ENCODE measurements at regions of chr19 and their contacts with region 1.

Region 1: GRCh38 chr19:8158411-8159074 is 9.2 kb upstream of the FBN3 start:
- DNase-seq: peak; percentile 71 to 79
- H3K4me3 ChIP-seq: no peak overlapping the region
- H3K4me3 Mint-ChIP-seq: no peak overlapping the region
- H3K27ac Mint-ChIP-seq: no peak overlapping the region
- H3K4me1 ChIP-seq: peaks cover 3% of the 10 kb centered on the region; the same call in 1 of the 2 replicates
- H3K4me1 Mint-ChIP-seq: no peaks in the 10 kb centered on the region
- H3K27me3 ChIP-seq: no peaks in the 10 kb centered on the region
- H3K27me3 Mint-ChIP-seq: no peaks in the 10 kb centered on the region
- CTCF ChIP-seq: peak; percentile 59 to 72

Region 2: DNA sequence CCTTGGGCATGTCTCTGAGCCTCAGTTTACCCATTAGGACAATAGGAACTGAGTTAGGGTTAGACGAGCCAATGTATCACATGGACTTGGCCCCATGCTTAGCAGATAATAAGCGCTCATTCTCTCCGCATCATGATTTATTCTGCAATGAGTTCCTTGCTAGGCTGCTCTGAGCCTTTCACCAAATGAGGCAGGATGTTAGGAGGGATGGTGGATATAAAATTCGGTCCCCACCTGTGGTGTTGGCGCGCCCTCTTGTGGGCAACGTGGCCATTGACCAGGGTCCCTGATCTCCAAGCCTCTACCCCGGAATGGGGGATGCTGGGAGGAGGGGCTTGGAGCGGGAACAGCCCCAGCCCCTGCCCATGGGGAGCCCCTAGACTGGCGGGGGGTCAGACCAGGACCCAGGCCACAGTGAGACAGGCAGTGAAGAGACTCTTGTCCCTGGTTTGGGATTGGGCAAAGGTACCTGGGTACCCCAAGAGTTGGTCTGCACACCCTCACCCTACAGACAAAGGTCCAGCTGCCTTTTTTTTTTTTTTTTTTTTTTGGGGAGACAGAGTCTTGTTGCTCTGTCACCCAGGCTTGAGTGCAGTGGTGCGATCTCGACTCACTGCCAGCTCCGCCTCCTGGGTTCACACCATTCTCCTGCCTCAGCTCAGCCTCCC is 94.5 kb after region 1 on chr19:
- CTCF ChIA-PET with region 1: interaction called, 9 read pairs
- POLR2A ChIA-PET with region 1: no interaction called
- intact Hi-C with region 1: loop called (anchors 1 kb)
- DNase-seq: peak; percentile 78 to 88
- H3K4me3 ChIP-seq: no peak overlapping the region
- H3K4me3 Mint-ChIP-seq: no peak overlapping the region
- H3K27ac Mint-ChIP-seq: no peak overlapping the region
- H3K4me1 ChIP-seq: no peaks in the 10 kb centered on the region
- H3K4me1 Mint-ChIP-seq: no peaks in the 10 kb centered on the region
- H3K27me3 ChIP-seq: no peaks in the 10 kb centered on the region
- H3K27me3 Mint-ChIP-seq: no peaks in the 10 kb centered on the region
- CTCF ChIP-seq: peak; percentile 85 to 93

Measured in Caco-2 (cell line).